Naive thymus-derived CD4-positive, alpha-beta T cell (primary cell): ENCODE measurements at regions of chr15 and their contacts with region 1.

Region 1: GRCh38 chr15:54998661-54999060 is 198.1 kb downstream of the RSL24D1 start:
- DNase-seq: no peak
- ATAC-seq: no peak
- H3K4me3 ChIP-seq: no peak overlapping the region
- H3K4me3 Mint-ChIP-seq: no peak overlapping the region
- H3K27ac ChIP-seq: no peak overlapping the region
- H3K27ac Mint-ChIP-seq: no peak overlapping the region
- H3K4me1 ChIP-seq: no peaks in the 10 kb centered on the region
- H3K4me1 Mint-ChIP-seq: peaks cover 0 to 2% (median 0%) of the 10 kb centered on the region in 7 donors
- H3K27me3 ChIP-seq: no peaks in the 10 kb centered on the region
- H3K27me3 Mint-ChIP-seq: peaks cover 0 to 11% (median 2%) of the 10 kb centered on the region in 5 donors

Region 2: DNA sequence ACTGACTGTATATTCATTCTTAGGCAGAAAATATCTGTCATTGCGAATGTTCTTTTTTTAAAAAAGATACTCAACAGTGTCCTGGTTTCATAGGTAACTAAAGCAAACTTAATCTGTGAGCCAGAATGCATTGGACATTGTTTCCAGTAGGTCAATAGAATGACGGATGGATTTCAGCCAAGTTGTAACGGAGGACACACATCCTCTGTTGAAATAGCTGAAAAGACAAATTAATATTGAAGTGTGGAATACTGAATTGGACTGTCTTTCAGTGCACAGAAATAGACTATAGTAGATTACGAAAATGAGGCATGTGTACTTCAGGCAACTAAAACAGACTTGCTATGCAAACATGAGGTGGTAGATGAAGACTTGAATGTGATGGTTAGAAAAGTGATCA is 1700.8 kb before region 1 on chr15:
- CTCF ChIA-PET with region 1: no interaction called
- POLR2A ChIA-PET with region 1: no interaction called
- intact Hi-C with region 1: loop called in 1 of 2 experiments (anchors 5 kb)
- DNase-seq: no peak
- ATAC-seq: no peak
- H3K4me3 ChIP-seq: no peak overlapping the region
- H3K4me3 Mint-ChIP-seq: no peak overlapping the region
- H3K27ac ChIP-seq: no peak overlapping the region
- H3K27ac Mint-ChIP-seq: no peak overlapping the region
- H3K4me1 ChIP-seq: no peaks in the 10 kb centered on the region
- H3K4me1 Mint-ChIP-seq: no peaks in the 10 kb centered on the region
- H3K27me3 ChIP-seq: no peaks in the 10 kb centered on the region
- H3K27me3 Mint-ChIP-seq: peaks cover 0 to 3% (median 0%) of the 10 kb centered on the region in 5 donors

Region 3: GRCh38 chr15:53786401-53786800 is 1212.3 kb before region 1 on chr15:
- CTCF ChIA-PET with region 1: no interaction called
- POLR2A ChIA-PET with region 1: no interaction called
- intact Hi-C with region 1: no loop called
- DNase-seq: no peak
- ATAC-seq: no peak
- H3K4me3 ChIP-seq: no peak overlapping the region
- H3K4me3 Mint-ChIP-seq: no peak overlapping the region
- H3K27ac ChIP-seq: no peak overlapping the region
- H3K27ac Mint-ChIP-seq: no peak overlapping the region
- H3K4me1 ChIP-seq: no peaks in the 10 kb centered on the region
- H3K4me1 Mint-ChIP-seq: no peaks in the 10 kb centered on the region
- H3K27me3 ChIP-seq: no peaks in the 10 kb centered on the region
- H3K27me3 Mint-ChIP-seq: peaks cover 0 to 12% (median 0%) of the 10 kb centered on the region in 5 donors